Natural killer cell (primary cell): ENCODE measurements at regions of chr10 and their contacts with region 1.

Region 1: GRCh38 chr10:74977913-74978847 is 133.3 kb upstream of the SAMD8 start:
- DNase-seq: peak; percentile 47 to 78
- ATAC-seq: peak; percentile 88 to 98 (median 92)
- H3K4me3 ChIP-seq: no peak overlapping the region
- H3K4me3 Mint-ChIP-seq: peak overlapping the region; percentile 77
- H3K27ac ChIP-seq: peak overlapping the region; percentile 72
- H3K27ac Mint-ChIP-seq: peak overlapping the region; percentile 90 to 96
- H3K4me1 ChIP-seq: peaks cover 15% of the 10 kb centered on the region
- H3K4me1 Mint-ChIP-seq: peaks cover 57 to 61% of the 10 kb centered on the region in 2 donors
- H3K27me3 ChIP-seq: no peaks in the 10 kb centered on the region
- H3K27me3 Mint-ChIP-seq: no peaks in the 10 kb centered on the region
- CTCF ChIP-seq: no peak

Region 2: DNA sequence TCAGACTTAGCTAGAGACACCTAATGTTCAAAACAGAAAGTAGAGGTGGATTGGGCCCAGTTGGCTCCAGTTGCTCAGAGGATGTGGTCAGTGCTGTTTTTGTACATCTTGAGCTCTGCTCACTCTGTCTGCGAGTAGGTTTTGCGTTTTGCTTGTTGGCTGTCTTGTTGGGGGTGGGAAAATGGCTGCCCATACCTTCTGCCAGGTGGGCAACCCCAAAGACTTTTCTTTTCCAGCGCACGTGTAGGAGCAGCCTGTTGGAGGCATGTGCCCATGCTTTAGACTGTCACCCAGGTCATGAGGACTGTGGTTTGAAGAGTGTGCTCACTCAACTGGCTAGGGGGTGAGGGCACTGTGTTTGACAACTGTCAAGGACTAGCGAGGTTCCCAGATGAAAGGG is 77.9 kb before region 1 on chr10:
- intact Hi-C with region 1: loop called (anchors 1 kb)
- DNase-seq: peak; percentile 34 to 47
- ATAC-seq: peak; percentile 82 to 90 (median 84)
- H3K4me3 ChIP-seq: no peak overlapping the region
- H3K4me3 Mint-ChIP-seq: peak overlapping the region; percentile 72
- H3K27ac ChIP-seq: peak overlapping the region; percentile 41
- H3K27ac Mint-ChIP-seq: peak overlapping the region; percentile 93
- H3K4me1 ChIP-seq: peaks cover 25% of the 10 kb centered on the region
- H3K4me1 Mint-ChIP-seq: peaks cover 72 to 75% of the 10 kb centered on the region in 2 donors
- H3K27me3 ChIP-seq: no peaks in the 10 kb centered on the region
- H3K27me3 Mint-ChIP-seq: no peaks in the 10 kb centered on the region
- CTCF ChIP-seq: no peak

Region 3: GRCh38 chr10:75008952-75009351 is 30.8 kb after region 1 on chr10:
- intact Hi-C with region 1: loop called (anchors 2 kb)
- DNase-seq: no peak
- ATAC-seq: peak; percentile 59 to 78 (median 72)
- H3K4me3 ChIP-seq: no peak overlapping the region
- H3K4me3 Mint-ChIP-seq: peak overlapping the region; percentile 85
- H3K27ac ChIP-seq: peak overlapping the region; percentile 80
- H3K27ac Mint-ChIP-seq: peak overlapping the region; percentile 93 to 97
- H3K4me1 ChIP-seq: peaks cover 32% of the 10 kb centered on the region
- H3K4me1 Mint-ChIP-seq: peaks cover 44 to 49% of the 10 kb centered on the region in 2 donors
- H3K27me3 ChIP-seq: no peaks in the 10 kb centered on the region
- H3K27me3 Mint-ChIP-seq: no peaks in the 10 kb centered on the region
- CTCF ChIP-seq: no peak

Region 4: DNA sequence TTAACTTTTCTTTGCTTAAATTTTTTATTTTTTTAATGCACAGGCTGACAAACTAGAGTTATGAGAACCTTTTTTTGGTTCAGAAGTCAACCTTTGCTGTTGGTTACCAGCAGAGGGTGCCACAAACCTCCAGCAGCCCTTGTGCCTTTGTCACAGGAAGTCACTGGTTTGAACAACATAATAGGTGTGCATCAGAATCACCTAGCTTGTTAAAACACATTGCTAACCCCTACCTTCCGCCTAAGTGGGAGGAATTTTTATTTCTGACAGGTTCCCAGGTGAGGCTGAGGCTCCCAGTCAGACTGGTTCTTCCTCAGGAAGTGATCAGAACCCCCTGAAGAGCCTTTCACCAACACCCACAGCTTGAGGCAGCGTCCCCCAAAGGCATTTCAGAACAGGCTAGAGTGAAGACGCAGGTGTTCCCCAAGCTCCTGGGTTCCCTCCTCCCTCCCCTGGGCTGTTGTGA is 209.8 kb after region 1 on chr10:
- intact Hi-C with region 1: no loop called
- DNase-seq: peak; percentile 55 to 90
- ATAC-seq: peak; percentile 95 to 97 (median 97)
- H3K4me3 ChIP-seq: no peak overlapping the region
- H3K4me3 Mint-ChIP-seq: peak overlapping the region; percentile 31
- H3K27ac ChIP-seq: peak overlapping the region; percentile 67
- H3K27ac Mint-ChIP-seq: peak overlapping the region; percentile 70 to 75
- H3K4me1 ChIP-seq: peaks cover 15% of the 10 kb centered on the region
- H3K4me1 Mint-ChIP-seq: peaks cover 5 to 8% of the 10 kb centered on the region in 2 donors
- H3K27me3 ChIP-seq: no peaks in the 10 kb centered on the region
- H3K27me3 Mint-ChIP-seq: no peaks in the 10 kb centered on the region
- CTCF ChIP-seq: peak; percentile 77